Vagina (tissue), 2 donors: ENCODE measurements at regions of chr1 and their contacts with region 1.

Region 1: DNA sequence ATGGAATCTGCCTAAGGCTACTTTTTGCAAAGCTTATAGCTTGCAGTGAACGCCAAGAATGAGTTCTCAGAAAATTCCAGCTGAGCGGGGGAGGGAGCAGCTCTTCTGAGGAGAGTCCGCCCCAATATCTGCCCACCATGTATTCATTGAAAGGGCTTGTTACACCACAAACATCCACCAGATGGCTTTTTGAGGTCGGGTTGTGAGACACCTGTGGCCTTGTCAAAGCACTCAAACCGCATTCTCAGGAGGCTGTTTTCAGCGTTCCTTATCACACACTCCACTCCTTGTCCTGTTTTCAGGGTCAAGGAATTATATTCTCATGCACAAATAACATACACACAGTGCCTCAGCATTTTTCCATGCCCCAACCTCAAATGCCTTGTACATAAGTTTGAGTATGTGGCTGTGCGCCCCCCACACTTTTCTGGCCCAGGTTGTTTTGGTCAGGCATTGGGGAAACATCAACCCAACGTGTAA is 3.9 kb upstream of the C4BPB start:
- DNase-seq: no peak
- H3K4me3 ChIP-seq: no peak overlapping the region
- H3K27ac ChIP-seq: no peak overlapping the region
- H3K4me1 ChIP-seq: peaks cover 5% of the 10 kb centered on the region
- H3K27me3 ChIP-seq: no peaks in the 10 kb centered on the region
- CTCF ChIP-seq: peak in 1 of 3 experiments; percentile 46
- POLR2A ChIP-seq: no peak

Region 2: GRCh38 chr1:207393610-207394009 is 308.9 kb after region 1 on chr1:
- intact Hi-C with region 1: loop called (anchors 10 kb)
- DNase-seq: no peak
- H3K4me3 ChIP-seq: no peak overlapping the region
- H3K27ac ChIP-seq: no peak overlapping the region
- H3K4me1 ChIP-seq: no peaks in the 10 kb centered on the region
- H3K27me3 ChIP-seq: no peaks in the 10 kb centered on the region
- CTCF ChIP-seq: no peak
- POLR2A ChIP-seq: no peak

Region 3: GRCh38 chr1:208565761-208566440 is 1481.2 kb after region 1 on chr1:
- intact Hi-C with region 1: no loop called
- DNase-seq: no peak
- H3K4me3 ChIP-seq: no peak overlapping the region
- H3K27ac ChIP-seq: no peak overlapping the region
- H3K4me1 ChIP-seq: no peaks in the 10 kb centered on the region
- H3K27me3 ChIP-seq: no peaks in the 10 kb centered on the region
- CTCF ChIP-seq: no peak
- POLR2A ChIP-seq: no peak